ENCODE measurements at regions of chr4 and their contacts with region 1.

Region 1: GRCh38 chr4:37715889-37716402 is 29.8 kb upstream of the RELL1 start:
- DNase-seq: peak; percentile 9
- H3K4me3 Mint-ChIP-seq: no peak overlapping the region
- H3K27ac Mint-ChIP-seq: peak overlapping the region; percentile 88
- H3K4me1 Mint-ChIP-seq: peaks cover 24% of the 10 kb centered on the region
- H3K27me3 Mint-ChIP-seq: peaks cover 2% of the 10 kb centered on the region

Region 2: GRCh38 chr4:37666625-37667071 is 49.3 kb before region 1 on chr4:
- intact Hi-C with region 1: loop called (anchors 5 kb)
- DNase-seq: peak; percentile 10
- H3K4me3 Mint-ChIP-seq: peak overlapping the region; percentile 19
- H3K27ac Mint-ChIP-seq: peak overlapping the region; percentile 40
- H3K4me1 Mint-ChIP-seq: peaks cover 68% of the 10 kb centered on the region
- H3K27me3 Mint-ChIP-seq: no peaks in the 10 kb centered on the region

Region 3: DNA sequence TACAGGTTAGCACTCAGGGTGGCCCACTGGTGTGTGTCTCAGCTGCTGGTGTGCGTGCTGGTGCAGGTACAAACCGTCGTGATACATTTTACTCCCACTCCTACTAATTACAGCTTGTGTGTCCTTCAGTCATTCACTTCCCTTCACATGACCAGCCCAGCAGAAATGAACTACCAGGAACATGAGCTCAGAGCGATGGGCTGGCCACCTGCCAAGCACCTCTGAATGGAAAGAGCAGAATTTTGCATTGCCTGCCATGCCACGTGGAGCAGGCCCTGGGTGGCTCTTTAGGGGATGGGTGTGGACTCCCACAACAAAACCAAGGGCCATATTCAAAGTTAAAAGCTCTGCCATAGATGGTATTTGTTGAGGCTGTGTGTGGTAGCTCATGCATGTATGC is 51.6 kb after region 1 on chr4:
- intact Hi-C with region 1: loop called (anchors 5 kb)
- DNase-seq: no peak
- H3K4me3 Mint-ChIP-seq: no peak overlapping the region
- H3K27ac Mint-ChIP-seq: no peak overlapping the region
- H3K4me1 Mint-ChIP-seq: peaks cover 12% of the 10 kb centered on the region
- H3K27me3 Mint-ChIP-seq: no peaks in the 10 kb centered on the region